ENCODE measurements at regions of chr18 and their contacts with region 1.

Region 1: DNA sequence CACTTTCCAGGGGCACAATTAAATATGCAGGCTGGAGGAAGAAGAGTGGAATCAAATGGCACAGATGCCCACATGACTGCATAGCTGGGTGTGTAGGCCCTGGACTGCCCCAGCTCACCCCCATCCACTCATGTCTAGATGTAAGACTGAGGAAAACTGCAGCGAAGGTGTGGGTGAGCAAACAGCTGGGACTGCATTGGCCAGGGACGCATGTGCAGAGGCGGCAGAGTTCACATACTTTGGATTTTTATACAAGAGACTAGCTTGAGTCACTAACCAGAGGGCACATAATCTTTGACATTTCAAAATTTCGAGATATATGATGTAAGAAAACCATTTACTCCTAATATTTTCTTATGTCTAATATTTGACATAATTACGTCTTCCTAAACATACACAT is 60.1 kb downstream of the SPIRE1 start:
- DNase-seq: no peak
- ATAC-seq: peak; percentile 82

Region 2: GRCh38 chr18:12552884-12553242 is 44.9 kb before region 1 on chr18:
- intact Hi-C with region 1: loop called (anchors 5 kb)
- DNase-seq: no peak
- ATAC-seq: no peak

Measured in Right ventricle myocardium inferior (tissue), 1 donor.